Right cardiac atrium (tissue), 5 donors: ENCODE measurements at regions of chr3 and their contacts with region 1.

Region 1: DNA sequence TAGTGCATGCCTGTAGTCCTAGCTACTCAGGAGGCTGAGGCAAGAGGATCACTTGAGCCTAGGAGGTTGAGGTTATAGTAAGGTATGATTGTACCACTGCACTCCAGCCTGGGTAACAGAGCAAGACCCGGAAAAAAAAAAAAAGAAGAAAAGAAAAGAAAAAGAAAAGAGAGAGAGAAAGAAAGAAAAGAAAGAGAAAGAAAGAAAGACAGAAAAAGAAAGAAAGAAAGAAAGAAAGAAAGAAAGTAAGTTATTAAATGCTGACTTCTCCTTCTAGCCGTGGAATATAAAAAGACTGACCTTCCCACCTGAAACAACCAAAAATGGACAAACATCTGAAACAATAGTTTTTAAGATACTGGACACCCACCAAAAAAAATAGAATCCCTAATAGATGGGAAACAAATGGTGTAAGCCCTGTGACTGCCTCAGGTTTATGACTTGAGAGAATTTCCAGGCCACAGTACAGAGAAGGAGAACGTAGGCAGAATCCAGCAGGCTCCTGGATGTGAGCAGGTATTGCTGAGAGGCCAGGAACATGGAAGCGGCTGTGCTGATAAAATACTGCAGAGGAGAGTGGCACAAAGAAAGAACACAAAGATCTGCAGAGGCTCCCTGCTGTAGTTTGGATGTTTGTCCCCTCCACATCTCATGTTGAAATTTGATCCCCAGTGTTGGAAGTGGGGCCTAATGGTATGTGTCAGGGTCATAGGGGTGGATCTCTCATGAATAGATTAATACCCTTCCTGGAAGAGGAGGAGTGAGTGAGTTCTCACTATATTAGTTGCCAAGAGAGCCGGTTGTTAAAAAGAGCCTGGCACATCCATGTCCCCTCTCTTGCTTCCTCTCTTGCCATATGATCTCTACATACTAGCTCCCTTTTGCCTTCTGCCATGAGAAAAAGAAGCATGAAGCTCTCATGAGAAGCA is 41.8 kb upstream of the PRSS50 start:
- DNase-seq: no peak
- ATAC-seq: peak in 1 of 2 donors; percentile 43
- H3K4me3 ChIP-seq: no peak overlapping the region
- H3K27ac ChIP-seq: no peak overlapping the region
- H3K4me1 ChIP-seq: no peaks in the 10 kb centered on the region
- H3K27me3 ChIP-seq: no peaks in the 10 kb centered on the region

Region 2: DNA sequence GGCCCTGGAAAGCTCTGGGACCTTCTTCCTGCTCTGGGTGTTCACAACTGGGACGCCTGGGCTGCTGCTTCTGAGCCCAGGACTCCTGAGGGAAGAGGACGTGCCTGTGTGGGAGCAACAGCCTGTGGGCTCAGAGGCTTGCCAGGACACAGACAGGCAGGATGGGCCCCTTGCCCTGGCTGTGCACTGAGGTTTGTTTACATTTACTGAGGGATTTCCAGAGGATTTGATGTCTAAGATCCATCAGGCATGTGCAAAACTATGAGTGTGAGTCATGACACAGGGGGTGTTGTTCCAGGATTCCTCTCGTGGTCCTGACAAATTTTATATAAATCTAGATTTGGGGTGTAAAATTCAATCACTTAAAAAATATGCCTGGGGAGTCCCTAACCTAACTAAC is 862.5 kb before region 1 on chr3:
- intact Hi-C with region 1: no loop called
- DNase-seq: no peak
- ATAC-seq: no peak
- H3K4me3 ChIP-seq: no peak overlapping the region
- H3K27ac ChIP-seq: no peak overlapping the region
- H3K4me1 ChIP-seq: no peaks in the 10 kb centered on the region
- H3K27me3 ChIP-seq: no peaks in the 10 kb centered on the region

Region 3: DNA sequence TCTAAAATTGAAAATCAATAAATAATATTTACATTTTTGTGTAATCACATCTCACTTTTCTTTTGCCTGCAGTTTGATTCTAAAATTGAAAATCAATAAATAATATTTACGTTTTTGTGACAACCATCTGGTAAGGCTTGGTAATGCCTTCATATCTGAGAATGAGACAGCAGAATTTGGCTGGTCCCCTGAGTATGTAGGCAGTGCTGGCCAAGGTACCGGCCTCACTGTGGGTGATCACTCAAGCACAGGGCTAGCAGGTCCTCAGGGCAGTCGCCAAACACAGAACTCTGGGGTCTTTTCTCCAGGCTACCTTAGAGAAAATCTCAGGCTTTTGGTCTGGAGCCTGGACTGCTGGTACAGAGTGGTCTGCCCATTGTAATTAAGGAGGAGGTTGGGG is 235.5 kb before region 1 on chr3:
- intact Hi-C with region 1: no loop called
- DNase-seq: no peak
- ATAC-seq: no peak
- H3K4me3 ChIP-seq: no peak overlapping the region
- H3K27ac ChIP-seq: no peak overlapping the region
- H3K4me1 ChIP-seq: no peaks in the 10 kb centered on the region
- H3K27me3 ChIP-seq: no peaks in the 10 kb centered on the region

Region 4: DNA sequence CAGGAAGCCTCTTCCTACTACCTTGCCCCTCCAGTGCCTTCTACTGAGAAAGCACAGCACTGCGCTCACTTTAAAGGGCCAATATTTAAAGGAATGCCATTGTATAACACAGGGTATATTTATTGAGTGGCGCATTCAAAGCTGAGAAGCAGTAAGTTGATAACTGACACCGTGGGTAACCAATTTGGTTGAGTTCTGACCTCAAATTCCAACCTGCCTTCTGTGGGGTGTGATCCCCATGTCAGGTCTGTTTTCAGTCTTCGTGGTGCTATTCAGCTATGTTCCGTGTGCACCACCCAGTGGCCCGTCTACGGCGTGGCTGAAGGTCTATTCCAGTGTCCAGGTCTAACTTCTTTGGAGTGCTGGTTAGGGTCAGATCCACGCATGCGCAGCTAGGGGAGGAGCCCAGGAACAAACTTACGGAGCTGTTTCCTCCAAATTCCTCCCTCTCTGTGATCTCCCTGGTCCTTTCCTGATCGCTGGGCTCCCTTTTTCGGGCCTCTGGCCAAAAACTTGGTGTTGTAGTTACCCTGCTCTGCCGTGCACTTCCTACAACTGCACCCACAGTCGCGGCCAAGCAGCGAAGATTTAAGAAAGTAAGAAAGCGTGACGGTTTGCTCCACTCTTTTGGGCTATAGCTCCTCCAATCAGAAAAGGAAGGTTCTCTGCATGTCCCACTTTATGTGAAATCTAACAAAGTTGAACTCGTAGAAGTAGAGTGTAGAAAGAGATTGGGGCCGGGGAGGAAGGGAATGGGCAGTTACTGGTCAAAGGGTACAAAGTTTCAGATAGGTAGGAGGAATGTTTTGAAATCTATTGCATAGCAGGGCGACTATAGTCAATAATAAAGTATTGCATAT is 201.1 kb before region 1 on chr3:
- intact Hi-C with region 1: no loop called
- DNase-seq: peak; percentile 89 to 92 (median 90)
- ATAC-seq: peak; percentile 91 to 97
- H3K4me3 ChIP-seq: peak overlapping the region; percentile 28
- H3K27ac ChIP-seq: peak overlapping the region; percentile 49
- H3K4me1 ChIP-seq: no peaks in the 10 kb centered on the region
- H3K27me3 ChIP-seq: no peaks in the 10 kb centered on the region

Region 5: DNA sequence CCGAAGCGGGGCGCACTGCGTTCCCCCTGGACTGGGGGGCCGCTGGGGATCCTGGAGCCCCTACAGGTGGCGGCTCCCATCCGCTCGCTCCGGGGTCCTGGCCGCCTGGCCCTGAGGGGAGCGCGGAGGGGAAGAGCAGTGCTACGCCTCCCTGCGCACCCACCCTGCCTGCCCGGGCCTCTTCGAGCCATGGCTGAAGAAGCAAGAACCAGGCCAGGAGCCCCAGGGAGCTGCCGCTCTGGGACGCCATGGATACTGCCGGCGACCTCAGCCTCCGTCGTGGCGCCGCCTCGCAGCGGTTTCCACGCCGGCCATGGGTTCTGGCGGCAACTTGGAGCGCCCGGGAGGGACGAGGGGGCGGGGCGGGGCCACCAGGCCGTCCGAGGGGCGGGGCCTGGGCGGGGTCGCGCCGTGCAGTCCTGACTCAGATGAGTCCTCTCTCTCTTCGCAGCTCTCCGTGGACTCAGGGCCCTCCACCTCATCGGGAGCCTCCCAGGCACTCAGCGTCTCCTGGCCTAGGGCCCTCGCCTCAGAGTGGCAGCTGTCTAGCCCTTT is 52.8 kb after region 1 on chr3:
- intact Hi-C with region 1: loop called in 1 of 4 experiments (anchors 10 kb)
- DNase-seq: peak; percentile 84 to 94 (median 90)
- ATAC-seq: peak; percentile 94 to 98
- H3K4me3 ChIP-seq: peak overlapping the region; percentile 1
- H3K27ac ChIP-seq: no peak overlapping the region
- H3K4me1 ChIP-seq: no peaks in the 10 kb centered on the region
- H3K27me3 ChIP-seq: no peaks in the 10 kb centered on the region

Region 6: GRCh38 chr3:46866720-46867549 is 107.4 kb after region 1 on chr3:
- intact Hi-C with region 1: no loop called
- DNase-seq: peak; percentile 89 to 97 (median 96)
- ATAC-seq: peak; percentile 32 to 67
- H3K4me3 ChIP-seq: no peak overlapping the region
- H3K27ac ChIP-seq: peak overlapping the region; percentile 60
- H3K4me1 ChIP-seq: peaks cover 25% of the 10 kb centered on the region
- H3K27me3 ChIP-seq: no peaks in the 10 kb centered on the region